ENCODE measurements at regions of chr19 and their contacts with region 1.

Region 1: DNA sequence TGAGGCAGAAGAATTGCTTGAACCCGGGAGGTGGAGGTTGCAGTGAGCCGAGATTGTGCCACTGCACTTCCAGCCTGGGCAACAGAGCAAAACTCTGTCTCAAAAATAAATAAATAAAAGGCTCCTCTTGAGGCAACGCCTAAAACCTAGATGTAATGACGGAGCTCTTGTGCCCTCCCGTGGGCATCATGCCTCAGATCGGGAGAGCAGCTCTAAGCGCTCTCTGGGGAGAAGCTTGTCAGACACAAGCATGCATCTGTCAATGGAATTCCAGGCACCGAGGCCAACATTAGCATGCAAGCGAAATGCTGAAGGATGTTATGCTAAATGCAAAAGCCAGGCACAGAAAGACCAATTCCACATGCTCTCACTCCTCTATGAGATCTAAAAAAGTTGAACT is 45.6 kb upstream of the MRI1 start:
- DNase-seq: no peak
- ATAC-seq: peak; percentile 73

Region 2: DNA sequence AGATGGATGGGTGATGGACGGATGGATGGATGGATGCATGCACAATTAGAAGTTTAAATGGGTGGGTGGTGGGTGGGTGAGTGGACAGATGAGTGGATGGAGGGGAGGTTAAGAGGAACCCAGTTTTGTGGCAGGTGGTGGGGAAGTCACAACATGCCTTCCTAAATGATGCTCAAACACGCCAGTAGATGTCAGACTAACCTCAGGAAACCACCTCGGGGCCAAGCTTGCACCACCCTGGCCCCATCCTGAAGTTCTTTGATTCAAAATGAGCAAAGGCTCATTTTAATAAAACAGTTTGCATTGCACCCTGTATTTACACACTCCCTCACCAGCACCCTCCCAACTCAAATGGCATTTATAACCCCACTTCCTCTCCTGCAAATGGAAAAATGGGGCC is 121.1 kb before region 1 on chr19:
- intact Hi-C with region 1: loop called (anchors 1 kb)
- DNase-seq: no peak
- ATAC-seq: peak; percentile 83

Region 3: GRCh38 chr19:13872695-13873389 is 154.1 kb after region 1 on chr19:
- intact Hi-C with region 1: no loop called
- DNase-seq: no peak
- ATAC-seq: peak; percentile 55

Measured in Right ventricle myocardium inferior (tissue), 1 donor.